ENCODE measurements at regions of chr7 and their contacts with region 1.

Region 1: GRCh38 chr7:101153969-101154692 is at the start of gene AP1S1:
- DNase-seq: peak; percentile 93 to 97 (median 96)
- H3K4me3 ChIP-seq: peak within 1 kb of the TSS; percentile 30 to 90 (median 57)
- H3K27ac ChIP-seq: peak within 1 kb of the TSS in 1 of 5 donors; percentile 23
- H3K4me1 ChIP-seq: peaks cover 0 to 10% of the 10 kb centered on the region in 2 donors
- H3K27me3 ChIP-seq: no peaks in the 10 kb centered on the region
- CTCF ChIP-seq: no peak
- POLR2A ChIP-seq: peak in 1 of 2 donors; percentile 22
- total RNA-seq, gene AP1S1: 26.9 to 190 (median 45.8) TPM

Region 2: DNA sequence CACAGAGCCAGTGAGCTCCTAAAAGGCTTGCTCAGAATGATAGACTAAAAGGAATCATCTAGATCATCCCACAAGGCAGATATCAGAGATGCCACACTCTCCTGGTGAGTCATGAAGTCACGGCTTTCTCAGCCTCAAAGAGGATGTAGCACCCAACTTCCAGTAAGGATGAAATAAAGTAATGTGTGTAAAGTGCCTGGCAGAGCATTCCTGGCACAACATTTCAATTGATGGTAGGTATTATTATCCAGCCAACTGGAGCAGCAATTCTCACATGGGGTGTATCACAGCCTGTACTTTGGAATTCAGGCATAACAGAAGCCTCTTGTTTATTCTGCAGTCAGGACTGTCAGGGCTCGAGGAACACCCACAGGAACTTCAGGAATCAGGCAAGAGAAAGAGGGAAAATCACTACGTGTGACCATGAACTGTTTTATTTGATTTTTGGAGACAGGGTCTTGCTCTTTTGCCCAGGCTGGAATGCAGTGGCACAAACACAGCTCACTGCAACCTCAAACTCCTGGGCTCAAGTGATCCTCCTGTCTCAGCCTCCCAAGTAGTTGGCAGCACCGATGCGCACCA is 31.2 kb after region 1 on chr7:
- intact Hi-C with region 1: loop called in 1 of 2 experiments (anchors 5 kb)
- DNase-seq: no peak
- H3K4me3 ChIP-seq: no peak overlapping the region
- H3K27ac ChIP-seq: no peak overlapping the region
- H3K4me1 ChIP-seq: no peaks in the 10 kb centered on the region
- H3K27me3 ChIP-seq: peaks cover 20% of the 10 kb centered on the region
- CTCF ChIP-seq: no peak
- POLR2A ChIP-seq: no peak

Region 3: GRCh38 chr7:101287032-101287431 is 132.9 kb after region 1 on chr7:
- intact Hi-C with region 1: loop called (anchors 5 to 10 kb)
- DNase-seq: no peak
- H3K4me3 ChIP-seq: no peak overlapping the region
- H3K27ac ChIP-seq: no peak overlapping the region
- H3K4me1 ChIP-seq: no peaks in the 10 kb centered on the region
- H3K27me3 ChIP-seq: peaks cover 7% of the 10 kb centered on the region
- CTCF ChIP-seq: no peak
- POLR2A ChIP-seq: no peak

Region 4: GRCh38 chr7:101436857-101437576 is 282.9 kb after region 1 on chr7:
- intact Hi-C with region 1: no loop called
- DNase-seq: peak; percentile 67 to 86 (median 73)
- H3K4me3 ChIP-seq: no peak overlapping the region
- H3K27ac ChIP-seq: no peak overlapping the region
- H3K4me1 ChIP-seq: no peaks in the 10 kb centered on the region
- H3K27me3 ChIP-seq: no peaks in the 10 kb centered on the region
- CTCF ChIP-seq: no peak
- POLR2A ChIP-seq: no peak